Caco-2 (cell line): ENCODE measurements at regions of chr10 and their contacts with region 1.

Region 1: GRCh38 chr10:95693668-95694534 is at the start of gene TCTN3:
- DNase-seq: peak; percentile 99
- H3K4me3 ChIP-seq: peak within 1 kb of the TSS; percentile 86
- H3K4me3 Mint-ChIP-seq: peak within 1 kb of the TSS; percentile 97
- H3K27ac Mint-ChIP-seq: peak within 1 kb of the TSS; percentile 99
- H3K4me1 ChIP-seq: 0 out of 2 replicates have a peak, but pooled peaks cover 2% of the 10 kb centered on the region
- H3K4me1 Mint-ChIP-seq: peaks cover 17% of the 10 kb centered on the region
- H3K27me3 ChIP-seq: no peaks in the 10 kb centered on the region
- H3K27me3 Mint-ChIP-seq: no peaks in the 10 kb centered on the region
- CTCF ChIP-seq: peak; percentile 98 to 99
- total RNA-seq, gene TCTN3: 49.2 and 52.1 TPM in 2 replicates

Region 2: DNA sequence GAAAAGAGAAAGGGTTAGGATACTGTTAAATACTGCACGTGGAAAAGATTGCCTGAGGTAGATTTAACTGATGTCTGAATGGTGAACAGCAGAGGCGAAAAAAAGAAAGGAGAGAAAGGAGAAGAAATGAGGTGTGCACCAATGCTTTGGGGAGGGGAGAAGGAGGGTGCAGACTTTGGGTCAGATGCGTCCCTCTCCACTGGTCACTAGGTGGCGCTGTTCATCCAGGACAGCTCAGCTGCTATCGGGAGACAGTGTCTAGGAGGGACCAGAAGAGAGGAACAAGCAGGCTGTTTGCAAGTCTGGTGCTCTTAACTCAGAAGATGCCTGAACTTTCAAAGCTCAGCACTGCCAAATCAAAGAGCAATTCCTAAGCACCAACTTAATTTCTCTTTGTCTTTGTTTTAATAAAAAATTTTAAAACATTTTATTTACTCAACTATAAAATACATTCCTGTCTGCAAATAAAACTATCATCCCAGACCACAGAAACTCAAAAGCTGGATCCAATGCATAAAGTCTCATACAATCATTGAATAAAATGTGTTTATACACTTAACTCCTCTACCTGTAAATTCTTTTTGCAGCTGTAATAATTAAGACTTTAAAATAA is 319.2 kb before region 1 on chr10:
- CTCF ChIA-PET with region 1: no interaction called
- POLR2A ChIA-PET with region 1: no interaction called
- intact Hi-C with region 1: loop called (anchors 5 kb)
- DNase-seq: peak; percentile 79 to 85
- H3K4me3 ChIP-seq: no peak overlapping the region
- H3K4me3 Mint-ChIP-seq: no peak overlapping the region
- H3K27ac Mint-ChIP-seq: no peak overlapping the region
- H3K4me1 ChIP-seq: no peaks in the 10 kb centered on the region
- H3K4me1 Mint-ChIP-seq: no peaks in the 10 kb centered on the region
- H3K27me3 ChIP-seq: no peaks in the 10 kb centered on the region
- H3K27me3 Mint-ChIP-seq: no peaks in the 10 kb centered on the region
- CTCF ChIP-seq: peak; percentile 94 to 95

Region 3: DNA sequence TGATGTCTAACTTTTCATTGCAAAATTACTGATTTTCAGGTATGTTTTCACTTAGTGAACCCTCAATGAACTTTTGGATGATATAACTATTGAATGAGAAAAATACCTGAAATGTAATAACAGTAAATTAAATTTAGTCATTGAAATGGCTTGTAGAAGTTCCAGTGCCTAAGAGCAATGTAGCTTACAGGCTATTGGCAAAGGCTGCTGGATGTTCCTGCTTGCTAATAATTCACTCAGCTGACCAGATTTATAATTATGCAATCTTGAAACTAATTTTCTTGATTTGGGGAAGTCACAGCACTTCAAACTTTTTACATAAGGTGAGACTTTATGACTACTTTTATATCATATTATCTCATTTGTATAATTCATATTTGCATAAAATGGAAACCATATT is 205.9 kb before region 1 on chr10:
- CTCF ChIA-PET with region 1: no interaction called
- POLR2A ChIA-PET with region 1: no interaction called
- intact Hi-C with region 1: no loop called
- DNase-seq: no peak
- H3K4me3 ChIP-seq: no peak overlapping the region
- H3K4me3 Mint-ChIP-seq: no peak overlapping the region
- H3K27ac Mint-ChIP-seq: no peak overlapping the region
- H3K4me1 ChIP-seq: peaks cover 16% of the 10 kb centered on the region
- H3K4me1 Mint-ChIP-seq: peaks cover 10% of the 10 kb centered on the region
- H3K27me3 ChIP-seq: no peaks in the 10 kb centered on the region
- H3K27me3 Mint-ChIP-seq: no peaks in the 10 kb centered on the region
- CTCF ChIP-seq: no peak

Region 4: GRCh38 chr10:95656291-95657164 is 37.4 kb before region 1 on chr10 and contains the start of gene ALDH18A1:
- CTCF ChIA-PET with region 1: interaction called, 13 read pairs
- POLR2A ChIA-PET with region 1: interaction called, 6 read pairs
- intact Hi-C with region 1: no loop called
- DNase-seq: peak; percentile 95 to 96
- H3K4me3 ChIP-seq: peak within 1 kb of the TSS; percentile 99
- H3K4me3 Mint-ChIP-seq: peak within 1 kb of the TSS; percentile 99
- H3K27ac Mint-ChIP-seq: peak within 1 kb of the TSS; percentile 98
- H3K4me1 ChIP-seq: peaks cover 6% of the 10 kb centered on the region
- H3K4me1 Mint-ChIP-seq: peaks cover 13% of the 10 kb centered on the region
- H3K27me3 ChIP-seq: no peaks in the 10 kb centered on the region
- H3K27me3 Mint-ChIP-seq: no peaks in the 10 kb centered on the region
- CTCF ChIP-seq: no peak
- total RNA-seq, gene ALDH18A1: 166 and 169 TPM in 2 replicates

Region 5: DNA sequence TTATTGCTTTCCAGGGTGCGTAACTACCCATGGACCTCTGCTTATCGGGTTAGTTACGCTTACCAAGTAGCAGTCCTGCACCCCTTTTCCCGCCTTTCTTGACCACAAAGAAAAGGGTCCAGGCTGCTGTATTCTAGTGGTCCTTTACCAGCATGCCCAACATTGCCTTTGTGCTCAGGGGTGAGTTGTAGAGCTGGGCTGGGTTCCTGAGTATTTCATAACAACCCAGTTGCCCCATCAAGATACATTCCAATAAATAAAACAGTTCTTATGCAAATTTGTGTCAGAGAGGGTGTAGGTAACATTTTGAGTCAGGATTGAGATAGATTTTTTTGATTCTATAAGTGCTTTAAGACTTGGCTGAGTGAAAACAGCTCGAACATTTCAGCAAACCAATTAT is 27.9 kb after region 1 on chr10:
- CTCF ChIA-PET with region 1: interaction called, 66 read pairs
- POLR2A ChIA-PET with region 1: no interaction called
- intact Hi-C with region 1: loop called (anchors 2 kb)
- DNase-seq: no peak
- H3K4me3 ChIP-seq: no peak overlapping the region
- H3K4me3 Mint-ChIP-seq: no peak overlapping the region
- H3K27ac Mint-ChIP-seq: no peak overlapping the region
- H3K4me1 ChIP-seq: peaks cover 16% of the 10 kb centered on the region
- H3K4me1 Mint-ChIP-seq: peaks cover 16% of the 10 kb centered on the region
- H3K27me3 ChIP-seq: no peaks in the 10 kb centered on the region
- H3K27me3 Mint-ChIP-seq: no peaks in the 10 kb centered on the region
- CTCF ChIP-seq: no peak

Region 6: GRCh38 chr10:95841661-95842498 is 148.0 kb after region 1 on chr10:
- CTCF ChIA-PET with region 1: interaction called, 85 read pairs
- POLR2A ChIA-PET with region 1: no interaction called
- intact Hi-C with region 1: loop called (anchors 1 kb)
- DNase-seq: peak in 1 of 2 experiments; percentile 49
- H3K4me3 ChIP-seq: no peak overlapping the region
- H3K4me3 Mint-ChIP-seq: no peak overlapping the region
- H3K27ac Mint-ChIP-seq: no peak overlapping the region
- H3K4me1 ChIP-seq: peaks cover 18% of the 10 kb centered on the region
- H3K4me1 Mint-ChIP-seq: no peaks in the 10 kb centered on the region
- H3K27me3 ChIP-seq: no peaks in the 10 kb centered on the region
- H3K27me3 Mint-ChIP-seq: no peaks in the 10 kb centered on the region
- CTCF ChIP-seq: peak; percentile 53 to 58

Region 7: DNA sequence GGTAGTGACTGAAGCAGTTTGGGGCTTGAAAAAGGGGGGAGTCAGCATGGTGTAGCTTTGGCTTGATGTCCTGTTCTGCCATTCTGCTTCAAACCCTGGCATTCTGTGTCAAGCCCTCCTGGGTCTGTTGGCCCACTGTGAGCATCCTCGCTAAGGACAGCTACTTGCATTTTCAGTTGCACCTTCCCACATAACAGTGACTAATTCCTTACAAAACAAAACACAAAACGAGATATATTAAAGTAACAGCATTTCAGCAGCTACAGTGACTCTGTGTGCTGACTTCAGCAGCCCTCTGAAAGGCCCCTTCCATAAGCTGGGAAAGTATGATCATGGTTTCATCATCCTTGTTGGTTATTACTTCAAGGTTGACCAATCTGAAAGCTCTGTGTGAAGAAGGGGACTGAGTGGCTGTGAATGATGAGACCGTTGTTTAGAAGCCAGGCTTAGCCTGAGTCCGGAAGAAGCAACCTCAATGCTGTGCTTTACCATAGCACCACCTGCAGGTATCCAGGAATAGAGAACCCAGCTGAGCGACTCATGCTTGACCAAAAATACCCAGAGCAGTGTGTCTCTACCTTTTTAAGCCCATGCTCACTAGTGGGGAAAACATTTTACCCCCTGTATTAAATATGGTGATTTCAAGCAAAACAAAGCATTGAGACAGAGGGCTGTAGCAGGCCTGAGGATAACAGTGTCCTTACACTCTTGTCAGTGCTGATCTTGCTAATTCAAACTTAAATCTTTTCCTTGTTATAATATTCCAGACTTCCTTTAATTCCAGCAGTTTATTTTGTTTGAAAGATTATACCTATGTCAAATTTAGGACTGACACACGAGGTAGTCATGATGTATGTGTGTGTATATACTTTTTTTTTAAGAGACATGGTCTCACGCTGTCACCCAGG is 171.3 kb after region 1 on chr10:
- CTCF ChIA-PET with region 1: interaction called, 75 read pairs
- POLR2A ChIA-PET with region 1: interaction called, 14 read pairs
- intact Hi-C with region 1: loop called (anchors 1 kb)
- DNase-seq: peak; percentile 55 to 64
- H3K4me3 ChIP-seq: no peak overlapping the region
- H3K4me3 Mint-ChIP-seq: no peak overlapping the region
- H3K27ac Mint-ChIP-seq: no peak overlapping the region
- H3K4me1 ChIP-seq: peaks cover 17% of the 10 kb centered on the region; the same call in 1 of the 2 replicates
- H3K4me1 Mint-ChIP-seq: peaks cover 15% of the 10 kb centered on the region
- H3K27me3 ChIP-seq: no peaks in the 10 kb centered on the region
- H3K27me3 Mint-ChIP-seq: no peaks in the 10 kb centered on the region
- CTCF ChIP-seq: peak; percentile 56 to 64

Region 8: DNA sequence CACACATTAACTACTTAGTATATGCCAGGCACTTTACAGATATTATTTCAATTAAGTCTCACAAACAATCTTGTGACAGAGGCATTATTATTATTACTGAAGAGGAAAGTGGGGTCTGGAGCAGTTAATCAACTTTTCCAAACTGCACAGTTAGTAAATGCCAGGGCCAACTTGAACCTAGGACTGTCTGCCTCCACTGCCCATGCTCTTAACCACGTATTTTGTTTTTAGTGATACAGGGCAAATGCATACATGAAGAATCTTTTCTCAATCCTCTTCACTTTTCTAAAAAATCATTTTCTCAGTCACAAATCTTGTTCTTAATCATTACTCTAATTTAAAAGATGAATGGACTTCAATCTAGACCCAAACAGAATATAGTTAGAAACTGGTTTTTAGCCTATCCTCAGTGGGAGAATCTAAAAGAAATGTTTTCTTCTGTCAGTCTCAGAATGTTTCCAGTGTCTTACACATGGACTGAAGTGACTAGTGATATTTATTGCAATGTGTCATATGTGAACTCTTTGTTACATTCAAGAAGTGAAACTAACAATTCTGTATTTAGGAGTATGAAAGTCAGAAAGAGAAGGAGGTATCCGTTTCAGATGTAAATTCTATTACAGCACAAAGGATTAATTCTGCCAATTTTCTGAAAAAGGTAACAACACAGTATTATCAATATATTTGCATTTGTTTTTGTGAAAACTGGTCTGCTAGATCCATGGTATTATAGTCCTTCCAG is 294.0 kb after region 1 on chr10:
- CTCF ChIA-PET with region 1: interaction called, 11 read pairs
- POLR2A ChIA-PET with region 1: no interaction called
- intact Hi-C with region 1: loop called (anchors 5 kb)
- DNase-seq: no peak
- H3K4me3 ChIP-seq: no peak overlapping the region
- H3K4me3 Mint-ChIP-seq: no peak overlapping the region
- H3K27ac Mint-ChIP-seq: no peak overlapping the region
- H3K4me1 ChIP-seq: no peaks in the 10 kb centered on the region
- H3K4me1 Mint-ChIP-seq: no peaks in the 10 kb centered on the region
- H3K27me3 ChIP-seq: no peaks in the 10 kb centered on the region
- H3K27me3 Mint-ChIP-seq: peaks cover 12% of the 10 kb centered on the region
- CTCF ChIP-seq: no peak